ENCODE measurements at regions of chr3 and their contacts with region 1.

Region 1: GRCh38 chr3:196528639-196529233 is 13.6 kb upstream of the SMCO1 start:
- DNase-seq: peak; percentile 64 to 88 (median 80)
- H3K4me3 ChIP-seq: peak overlapping the region; percentile 22 to 87 (median 66)
- H3K27ac ChIP-seq: peak overlapping the region; percentile 54 to 58
- H3K4me1 ChIP-seq: peaks cover 0 to 8% (median 5%) of the 10 kb centered on the region in 4 experiments
- H3K27me3 ChIP-seq: no peaks in the 10 kb centered on the region

Region 2: DNA sequence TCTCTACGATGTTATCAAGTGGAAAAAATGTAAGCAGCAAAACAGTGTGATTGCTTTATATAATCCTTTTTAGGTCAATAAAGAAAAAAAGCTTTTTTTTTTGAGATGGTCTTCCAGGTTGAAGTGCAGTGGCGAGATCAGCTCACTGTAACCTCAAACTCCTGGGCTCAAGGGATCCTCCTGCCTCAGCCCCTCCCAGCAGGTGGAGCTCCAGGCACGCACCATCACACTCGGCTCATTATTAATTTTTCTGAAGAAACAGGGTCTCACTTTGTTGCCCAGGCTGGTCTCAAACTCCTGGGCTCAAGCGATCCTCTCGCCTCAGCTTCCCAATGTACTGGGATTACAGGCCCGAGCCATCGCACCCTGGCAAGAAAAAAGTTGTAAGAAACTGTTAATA is 42.5 kb before region 1 on chr3:
- CTCF ChIA-PET with region 1: interaction called, 49 read pairs
- POLR2A ChIA-PET with region 1: interaction called, 3 read pairs
- DNase-seq: peak; percentile 45 to 68 (median 68)
- H3K4me3 ChIP-seq: no peak overlapping the region
- H3K27ac ChIP-seq: no peak overlapping the region
- H3K4me1 ChIP-seq: no peaks in the 10 kb centered on the region
- H3K27me3 ChIP-seq: no peaks in the 10 kb centered on the region

Region 3: GRCh38 chr3:196547067-196547466 is 18.3 kb after region 1 on chr3:
- CTCF ChIA-PET with region 1: interaction called, 12 read pairs
- POLR2A ChIA-PET with region 1: no interaction called
- DNase-seq: no peak
- H3K4me3 ChIP-seq: no peak overlapping the region
- H3K27ac ChIP-seq: no peak overlapping the region
- H3K4me1 ChIP-seq: no peaks in the 10 kb centered on the region
- H3K27me3 ChIP-seq: no peaks in the 10 kb centered on the region

Region 4: GRCh38 chr3:196554205-196554604 is 25.5 kb after region 1 on chr3:
- CTCF ChIA-PET with region 1: interaction called, 20 read pairs
- POLR2A ChIA-PET with region 1: interaction called, 5 read pairs
- DNase-seq: peak; percentile 54 to 83 (median 74)
- H3K4me3 ChIP-seq: peak overlapping the region in 4 of 7 experiments; percentile 2 to 41 (median 13)
- H3K27ac ChIP-seq: peak overlapping the region in 1 of 2 experiments; percentile 45
- H3K4me1 ChIP-seq: peaks cover 9 to 32% (median 14%) of the 10 kb centered on the region in 4 experiments
- H3K27me3 ChIP-seq: no peaks in the 10 kb centered on the region

Region 5: DNA sequence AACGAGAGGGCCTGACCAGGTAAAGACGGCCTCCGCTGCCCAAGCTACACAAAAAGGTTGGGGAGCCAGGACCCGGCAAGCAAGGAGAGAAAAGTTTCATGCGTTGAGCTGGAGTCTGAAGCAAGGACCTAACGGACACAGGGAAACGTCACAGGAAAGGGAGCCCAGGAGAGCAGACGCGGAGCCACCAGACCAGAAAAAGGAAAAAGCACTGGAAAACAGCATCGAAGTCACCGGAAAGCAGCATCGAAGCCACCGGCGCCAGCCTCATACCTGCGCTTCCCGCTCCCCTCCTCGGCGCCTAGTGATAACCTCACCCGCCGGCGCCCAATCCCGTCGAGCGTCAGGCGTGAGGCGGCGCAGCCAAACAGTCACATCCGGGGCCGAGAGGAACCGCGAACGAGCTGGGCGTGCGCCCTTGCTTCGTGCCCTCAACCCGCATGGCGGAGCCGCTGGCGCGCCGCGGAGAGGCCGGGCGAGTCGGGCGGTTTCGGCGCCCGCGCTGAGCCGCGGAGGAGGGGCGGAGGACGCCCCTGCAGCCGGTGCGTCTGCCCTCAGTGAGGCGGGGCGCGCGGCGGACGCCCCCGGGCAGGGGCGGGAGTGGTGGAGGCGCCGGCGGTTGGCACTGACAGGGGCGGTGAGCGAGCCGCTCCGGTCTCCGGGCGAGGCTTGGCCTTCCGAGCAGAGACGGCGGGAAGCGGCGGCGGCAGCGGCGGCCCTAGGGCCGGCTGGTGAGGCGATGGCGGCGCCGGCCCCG is 39.7 kb after region 1 on chr3 and contains the starts of genes FBXO45 and WDR53:
- CTCF ChIA-PET with region 1: interaction called, 11 read pairs
- POLR2A ChIA-PET with region 1: no interaction called
- DNase-seq: peak; percentile 94 to 98 (median 97)
- H3K4me3 ChIP-seq: peak within 1 kb of the TSS; percentile 84 to 100 (median 97)
- H3K27ac ChIP-seq: peak within 1 kb of the TSS; percentile 90 to 94
- H3K4me1 ChIP-seq: peaks cover 10 to 52% (median 43%) of the 10 kb centered on the region in 4 experiments
- H3K27me3 ChIP-seq: no peaks in the 10 kb centered on the region

Measured in common myeloid progenitor, CD34-positive (primary cell).